A673 (cell line): ENCODE measurements at regions of chr14 and their contacts with region 1.

Region 1: GRCh38 chr14:88492272-88493089 is 62.3 kb downstream of the PTPN21 start:
- DNase-seq: peak; percentile 82
- H3K4me3 ChIP-seq: no peak overlapping the region
- H3K27ac ChIP-seq: no peak overlapping the region
- H3K4me1 ChIP-seq: no peaks in the 10 kb centered on the region
- H3K27me3 ChIP-seq: no peaks in the 10 kb centered on the region
- CTCF ChIP-seq: peak; percentile 88

Region 2: DNA sequence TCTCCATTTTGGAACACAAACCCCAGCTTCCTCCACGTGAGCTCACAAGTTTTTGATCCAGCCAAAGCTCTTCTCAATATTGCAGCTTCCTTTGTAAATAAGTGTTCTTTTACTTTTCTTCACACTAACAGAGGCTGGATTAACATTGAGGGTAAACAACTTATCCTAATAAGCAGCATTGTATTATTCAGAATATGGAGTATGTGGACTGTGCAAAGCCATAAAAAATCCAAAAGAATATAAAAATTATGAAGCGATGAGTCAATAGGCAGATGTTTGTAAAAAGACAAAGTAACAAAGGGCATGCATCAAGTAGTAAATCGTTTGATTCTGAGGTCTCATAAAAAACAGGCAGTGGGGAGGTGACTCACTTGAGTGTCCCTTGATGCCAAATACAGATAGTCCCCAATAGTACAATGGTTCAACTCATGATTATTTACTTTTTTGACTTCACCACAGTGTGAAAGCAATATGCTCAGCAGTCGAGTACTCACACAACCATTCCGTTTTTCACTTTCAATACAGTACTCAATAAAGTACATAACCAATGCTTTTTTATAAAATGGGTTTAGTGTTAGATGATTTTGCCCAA is 146.3 kb before region 1 on chr14:
- CTCF ChIA-PET with region 1: no interaction called
- POLR2A ChIA-PET with region 1: no interaction called
- intact Hi-C with region 1: no loop called
- DNase-seq: no peak
- H3K4me3 ChIP-seq: no peak overlapping the region
- H3K27ac ChIP-seq: no peak overlapping the region
- H3K4me1 ChIP-seq: no peaks in the 10 kb centered on the region
- H3K27me3 ChIP-seq: no peaks in the 10 kb centered on the region
- CTCF ChIP-seq: no peak

Region 3: GRCh38 chr14:88562831-88563686 is 70.6 kb after region 1 on chr14 and contains the start of gene ZC3H14:
- CTCF ChIA-PET with region 1: interaction called, 3 read pairs
- POLR2A ChIA-PET with region 1: no interaction called
- intact Hi-C with region 1: loop called (anchors 1 kb)
- DNase-seq: peak; percentile 94
- H3K4me3 ChIP-seq: peak within 1 kb of the TSS; percentile 94
- H3K27ac ChIP-seq: peak within 1 kb of the TSS; percentile 95
- H3K4me1 ChIP-seq: peaks cover 4% of the 10 kb centered on the region
- H3K27me3 ChIP-seq: no peaks in the 10 kb centered on the region
- CTCF ChIP-seq: no peak
- total RNA-seq, gene ZC3H14: 91.0 and 93.2 TPM in 2 replicates

Region 4: GRCh38 chr14:88986146-88986841 is 493.8 kb after region 1 on chr14:
- CTCF ChIA-PET with region 1: no interaction called
- POLR2A ChIA-PET with region 1: no interaction called
- intact Hi-C with region 1: no loop called
- DNase-seq: no peak
- H3K4me3 ChIP-seq: no peak overlapping the region
- H3K27ac ChIP-seq: no peak overlapping the region
- H3K4me1 ChIP-seq: no peaks in the 10 kb centered on the region
- H3K27me3 ChIP-seq: no peaks in the 10 kb centered on the region
- CTCF ChIP-seq: no peak

Region 5: DNA sequence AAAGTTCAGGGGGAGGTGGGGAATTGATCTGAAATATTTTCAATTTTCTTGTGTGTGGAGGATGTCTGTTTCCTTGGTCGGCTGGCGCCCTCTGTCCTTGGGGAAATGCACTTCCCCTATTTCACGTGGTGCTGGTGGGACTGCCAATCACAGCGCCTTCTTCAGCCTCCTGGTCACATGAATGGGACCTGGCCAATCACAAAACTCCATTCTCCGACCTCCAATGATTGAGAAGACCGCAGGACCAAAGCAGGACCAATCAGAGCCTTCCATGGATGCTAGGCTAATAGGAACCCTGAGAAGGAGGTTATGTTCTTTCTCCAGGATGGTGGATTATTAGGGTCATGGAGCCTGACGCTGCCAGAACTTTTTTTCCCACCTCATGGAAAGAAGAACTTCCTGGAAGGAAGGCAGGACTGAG is 520.6 kb after region 1 on chr14:
- CTCF ChIA-PET with region 1: no interaction called
- POLR2A ChIA-PET with region 1: no interaction called
- intact Hi-C with region 1: loop called (anchors 5 kb)
- DNase-seq: peak; percentile 58
- H3K4me3 ChIP-seq: no peak overlapping the region
- H3K27ac ChIP-seq: no peak overlapping the region
- H3K4me1 ChIP-seq: no peaks in the 10 kb centered on the region
- H3K27me3 ChIP-seq: no peaks in the 10 kb centered on the region
- CTCF ChIP-seq: peak; percentile 45